Mammary epithelial cell (primary cell): ENCODE measurements at regions of chr6 and their contacts with region 1.

Region 1: GRCh38 chr6:146028293-146028691 is 570 bp upstream of the GRM1 start:
- DNase-seq: peak; percentile 46
- H3K4me3 ChIP-seq: peak overlapping the region in 1 of 3 experiments; percentile 7
- H3K27ac ChIP-seq: no peak overlapping the region
- H3K4me1 ChIP-seq: no peaks in the 10 kb centered on the region
- H3K27me3 ChIP-seq: peaks cover 24% of the 10 kb centered on the region
- CTCF ChIP-seq: no peak

Region 2: DNA sequence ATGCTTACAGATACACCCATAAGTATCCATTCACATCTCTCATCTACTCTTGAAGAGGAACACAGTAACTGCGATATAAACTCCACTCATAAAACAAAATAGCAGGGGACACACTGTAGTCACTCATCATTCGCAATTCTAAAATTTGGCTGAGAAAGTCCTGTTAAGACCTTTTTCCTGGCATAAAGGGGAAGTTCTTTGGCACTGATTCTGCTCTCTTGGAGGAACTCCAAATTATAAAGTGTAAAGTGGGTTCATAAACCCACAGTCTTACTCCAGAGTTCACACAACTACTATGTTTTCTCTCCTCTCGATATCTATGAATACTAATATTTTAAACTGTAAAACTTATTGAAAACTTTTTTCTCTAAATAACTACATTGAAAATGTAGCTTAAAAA is 651.1 kb after region 1 on chr6:
- CTCF ChIA-PET with region 1: no interaction called
- dilution Hi-C with region 1: no loop called
- in situ Hi-C with region 1: loop called in 1 of 2 experiments (anchors 25 kb)
- intact Hi-C with region 1: no loop called
- DNase-seq: no peak
- H3K4me3 ChIP-seq: no peak overlapping the region
- H3K27ac ChIP-seq: no peak overlapping the region
- H3K4me1 ChIP-seq: no peaks in the 10 kb centered on the region
- H3K27me3 ChIP-seq: peaks cover 6% of the 10 kb centered on the region
- CTCF ChIP-seq: no peak